ENCODE measurements at regions of chr16 and their contacts with region 1.

Region 1: DNA sequence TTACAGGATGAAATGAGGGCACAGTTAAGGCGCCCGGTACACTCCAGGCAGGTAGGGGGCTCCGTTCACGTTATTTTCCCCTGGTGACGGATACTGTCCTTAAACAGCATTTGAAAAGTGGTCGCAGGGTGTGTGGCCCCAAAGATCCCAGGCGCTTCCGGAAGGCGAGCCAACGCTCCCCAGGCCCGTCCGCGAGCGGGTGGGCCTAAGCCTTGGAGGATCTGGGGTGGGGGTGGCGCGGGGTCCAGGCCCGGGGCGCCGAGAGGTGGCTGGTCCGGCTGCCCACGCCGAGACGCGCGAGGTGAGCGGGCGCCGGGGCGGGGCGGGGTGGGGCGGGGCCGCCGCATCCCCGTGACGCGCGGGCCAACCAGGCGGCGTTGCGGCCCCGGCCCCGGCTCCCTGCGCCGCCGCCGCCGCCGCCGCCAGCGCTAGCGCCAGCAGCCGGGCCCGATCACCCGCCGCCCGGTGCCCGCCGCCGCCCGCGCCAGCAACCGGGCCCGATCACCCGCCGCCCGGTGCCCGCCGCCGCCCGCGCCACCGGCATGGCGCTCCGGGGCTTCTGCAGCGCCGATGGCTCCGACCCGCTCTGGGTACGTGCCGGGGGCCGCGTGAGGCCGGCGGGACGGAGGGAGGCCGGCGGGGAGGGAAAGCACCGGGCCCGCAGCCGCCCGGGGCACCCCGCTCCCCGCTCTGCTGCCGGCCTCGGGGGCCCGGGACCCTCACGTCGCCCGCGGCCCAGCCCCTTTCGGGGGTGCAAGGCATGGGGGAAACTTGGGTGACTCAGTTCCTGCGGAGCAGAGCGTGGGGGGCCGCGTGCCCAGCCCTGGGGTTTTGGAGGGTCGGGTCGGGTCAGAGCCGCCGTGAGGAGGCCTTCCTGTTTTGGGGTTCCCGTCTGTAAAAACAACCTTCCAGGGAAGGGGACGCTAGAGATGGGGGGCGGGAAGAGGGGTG is at the start of gene ABCC1:
- DNase-seq: no peak
- ATAC-seq: peak; percentile 71
- H3K4me3 ChIP-seq: peak within 1 kb of the TSS; percentile 89
- H3K27ac ChIP-seq: peak within 1 kb of the TSS; percentile 88
- H3K4me1 ChIP-seq: peaks cover 16% of the 10 kb centered on the region
- H3K27me3 ChIP-seq: no peaks in the 10 kb centered on the region
- CTCF ChIP-seq: no peak; a peak in 1 of 6 replicates
- EP300 ChIP-seq: no peak
- POLR2A ChIP-seq: peak; percentile 48; the same call in 1 of the 2 replicates
- RAD21 ChIP-seq: no peak
- polyA plus RNA-seq, gene ABCC1: 3.2 to 4.8 TPM

Region 2: DNA sequence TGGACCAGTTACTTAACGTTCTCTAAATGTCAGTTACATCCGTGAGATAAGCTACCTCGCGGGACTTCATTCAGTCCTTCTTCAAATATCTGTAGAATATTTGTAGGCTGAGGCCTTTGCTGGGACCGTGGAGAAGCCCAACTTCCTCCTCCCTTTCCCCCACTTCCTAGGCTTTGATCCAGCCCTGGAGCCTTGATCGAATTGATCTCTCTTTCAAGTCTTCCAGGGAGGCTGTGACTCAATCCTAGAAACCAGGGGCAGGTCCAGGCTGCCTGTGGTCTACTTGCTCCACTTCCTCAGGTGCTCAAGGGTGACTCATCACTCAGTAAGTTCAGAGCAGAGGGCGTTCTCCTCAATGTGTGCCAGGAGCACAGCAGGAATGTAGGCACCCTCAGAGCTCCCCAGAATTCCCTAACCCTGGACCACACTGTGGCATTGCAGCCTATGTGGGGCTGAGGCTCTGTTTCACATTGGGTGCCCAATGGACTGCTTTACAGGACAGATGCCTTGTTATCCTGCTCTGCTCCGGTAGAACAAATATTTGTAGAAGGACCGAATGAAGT is 49.9 kb before region 1 on chr16:
- CTCF ChIA-PET with region 1: no interaction called
- POLR2A ChIA-PET with region 1: interaction called, 4 read pairs
- RAD21 ChIA-PET with region 1: interaction called, 4 read pairs
- SMC1A ChIA-PET with region 1: interaction called, 10 read pairs
- in situ Hi-C with region 1: no loop called
- intact Hi-C with region 1: no loop called
- DNase-seq: peak; percentile 65
- ATAC-seq: peak; percentile 84
- H3K4me3 ChIP-seq: no peak overlapping the region
- H3K27ac ChIP-seq: peak overlapping the region; percentile 41
- H3K4me1 ChIP-seq: peaks cover 37% of the 10 kb centered on the region
- H3K27me3 ChIP-seq: no peaks in the 10 kb centered on the region
- CTCF ChIP-seq: no peak
- EP300 ChIP-seq: 0 out of 4 replicates have a peak, but pooled peaks have one; percentile 15 to 49
- POLR2A ChIP-seq: no peak
- RAD21 ChIP-seq: no peak

Region 3: DNA sequence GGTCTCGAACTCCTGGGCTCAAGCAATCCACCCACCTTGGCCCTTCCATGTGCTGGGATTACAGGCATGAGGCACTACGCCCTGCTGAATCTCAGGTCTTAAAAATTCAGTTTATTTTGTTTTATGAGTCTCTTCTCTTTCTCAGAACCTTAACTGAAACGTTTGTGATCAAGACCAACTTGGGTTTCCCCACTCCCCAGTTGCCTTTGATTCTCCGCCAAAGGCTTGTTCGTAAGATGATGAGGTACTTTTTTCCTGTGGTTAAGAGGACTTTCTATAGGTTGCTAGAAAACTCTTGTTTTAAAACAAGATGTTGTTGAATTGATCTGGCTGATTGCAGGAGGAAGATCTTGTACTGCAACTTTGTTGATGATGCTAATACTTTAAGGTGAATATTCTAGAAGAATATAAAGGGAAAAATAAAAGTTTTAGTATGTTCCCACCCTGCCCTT is 11.6 kb after region 1 on chr16:
- CTCF ChIA-PET with region 1: interaction called, 10 read pairs
- POLR2A ChIA-PET with region 1: interaction called, 21 read pairs
- RAD21 ChIA-PET with region 1: interaction called, 16 read pairs
- SMC1A ChIA-PET with region 1: interaction called, 40 read pairs
- in situ Hi-C with region 1: no loop called
- intact Hi-C with region 1: no loop called
- DNase-seq: peak; percentile 90
- ATAC-seq: peak; percentile 93
- H3K4me3 ChIP-seq: peak overlapping the region; percentile 63; the same call in 1 of the 2 replicates
- H3K27ac ChIP-seq: peak overlapping the region; percentile 85
- H3K4me1 ChIP-seq: peaks cover 22% of the 10 kb centered on the region
- H3K27me3 ChIP-seq: no peaks in the 10 kb centered on the region
- CTCF ChIP-seq: no peak
- EP300 ChIP-seq: peak; percentile 22 to 37; a peak in 1 of 4 replicates
- POLR2A ChIP-seq: no peak
- RAD21 ChIP-seq: no peak

Region 4: GRCh38 chr16:16007743-16008111 is 58.2 kb after region 1 on chr16:
- CTCF ChIA-PET with region 1: interaction called, 4 read pairs
- POLR2A ChIA-PET with region 1: interaction called, 11 read pairs
- RAD21 ChIA-PET with region 1: interaction called, 9 read pairs
- SMC1A ChIA-PET with region 1: interaction called, 31 read pairs
- in situ Hi-C with region 1: no loop called
- intact Hi-C with region 1: no loop called
- DNase-seq: peak; percentile 85
- ATAC-seq: peak; percentile 89
- H3K4me3 ChIP-seq: peak overlapping the region; percentile 34; the same call in 1 of the 2 replicates
- H3K27ac ChIP-seq: peak overlapping the region; percentile 79
- H3K4me1 ChIP-seq: peaks cover 26% of the 10 kb centered on the region
- H3K27me3 ChIP-seq: no peaks in the 10 kb centered on the region
- CTCF ChIP-seq: no peak
- EP300 ChIP-seq: peak; percentile 48 to 80; a peak in 2 of 4 replicates
- POLR2A ChIP-seq: peak; percentile 68
- RAD21 ChIP-seq: 0 out of 2 replicates have a peak, but pooled peaks have one; percentile 16

Region 5: DNA sequence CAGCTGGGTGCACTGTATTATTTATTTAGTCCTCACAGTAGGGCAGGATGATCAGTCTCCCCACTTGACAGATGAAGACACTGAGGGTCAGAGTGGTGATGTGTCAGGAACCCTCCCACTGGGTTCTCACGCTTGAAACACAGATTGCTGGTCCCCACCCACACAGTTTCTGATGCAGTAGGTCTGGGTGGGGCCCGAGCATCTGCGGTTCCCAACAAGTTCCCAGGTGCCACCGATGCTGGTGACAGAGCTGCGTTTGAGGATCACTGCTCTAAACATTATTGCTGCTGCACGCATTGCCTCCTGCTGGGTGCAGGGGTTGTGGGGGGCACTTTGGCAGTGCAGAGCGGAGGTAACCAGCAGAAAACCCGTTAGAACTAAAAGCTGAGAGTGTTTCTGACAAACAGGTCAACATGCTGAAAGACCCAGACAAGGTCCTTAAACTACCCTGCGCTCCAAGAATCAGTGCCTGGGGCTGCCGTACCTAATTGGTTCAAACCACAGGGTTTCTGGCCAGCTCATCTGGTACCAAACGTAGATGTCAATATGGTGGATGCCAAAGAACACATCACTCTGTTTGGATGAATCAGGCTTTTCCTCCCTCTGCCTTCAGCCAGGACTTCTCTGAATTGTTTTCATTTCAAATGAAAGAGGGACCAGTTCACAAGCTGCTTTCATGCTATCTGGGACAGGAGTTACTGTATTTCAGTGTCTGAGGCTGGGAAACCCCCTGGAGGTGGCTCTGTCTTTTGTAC is 75.9 kb after region 1 on chr16:
- CTCF ChIA-PET with region 1: interaction called, 4 read pairs
- POLR2A ChIA-PET with region 1: interaction called, 6 read pairs
- RAD21 ChIA-PET with region 1: interaction called, 5 read pairs
- SMC1A ChIA-PET with region 1: interaction called, 18 read pairs
- in situ Hi-C with region 1: no loop called
- intact Hi-C with region 1: loop called (anchors 5 kb)
- DNase-seq: no peak
- ATAC-seq: peak; percentile 86
- H3K4me3 ChIP-seq: no peak overlapping the region
- H3K27ac ChIP-seq: peak overlapping the region; percentile 57
- H3K4me1 ChIP-seq: peaks cover 17% of the 10 kb centered on the region
- H3K27me3 ChIP-seq: no peaks in the 10 kb centered on the region
- CTCF ChIP-seq: no peak
- EP300 ChIP-seq: no peak
- POLR2A ChIP-seq: 0 out of 2 replicates have a peak, but pooled peaks have one; percentile 16
- RAD21 ChIP-seq: peak; percentile 4; the same call in 1 of the 2 replicates